Activated CD4-positive, alpha-beta T cell treated with anti-CD3 and anti-CD28 coated beads for 36 hours (primary cell): ENCODE measurements at regions of chr7 and their contacts with region 1.

Region 1: GRCh38 chr7:24660546-24660945 is 87.3 kb downstream of the PALS2 start:
- DNase-seq: no peak
- ATAC-seq: no peak
- H3K4me3 Mint-ChIP-seq: no peak overlapping the region
- H3K27ac Mint-ChIP-seq: no peak overlapping the region
- H3K4me1 Mint-ChIP-seq: peaks cover 3% of the 10 kb centered on the region
- H3K27me3 Mint-ChIP-seq: no peaks in the 10 kb centered on the region

Region 2: GRCh38 chr7:23570592-23571200 is 1089.8 kb before region 1 on chr7:
- CTCF ChIA-PET with region 1: no interaction called
- POLR2A ChIA-PET with region 1: no interaction called
- intact Hi-C with region 1: loop called in 1 of 2 experiments (anchors 5 kb)
- DNase-seq: peak; percentile 83
- ATAC-seq: peak; percentile 92
- H3K4me3 Mint-ChIP-seq: no peak overlapping the region
- H3K27ac Mint-ChIP-seq: no peak overlapping the region
- H3K4me1 Mint-ChIP-seq: no peaks in the 10 kb centered on the region
- H3K27me3 Mint-ChIP-seq: peaks cover 4% of the 10 kb centered on the region

Region 3: GRCh38 chr7:24521917-24522620 is 138.5 kb before region 1 on chr7:
- CTCF ChIA-PET with region 1: no interaction called
- POLR2A ChIA-PET with region 1: no interaction called
- intact Hi-C with region 1: no loop called
- DNase-seq: no peak
- ATAC-seq: no peak
- H3K4me3 Mint-ChIP-seq: no peak overlapping the region
- H3K27ac Mint-ChIP-seq: no peak overlapping the region
- H3K4me1 Mint-ChIP-seq: no peaks in the 10 kb centered on the region
- H3K27me3 Mint-ChIP-seq: peaks cover 21% of the 10 kb centered on the region

Region 4: GRCh38 chr7:24587848-24588247 is 72.7 kb before region 1 on chr7:
- CTCF ChIA-PET with region 1: interaction called, 3 read pairs
- POLR2A ChIA-PET with region 1: no interaction called
- intact Hi-C with region 1: loop called in 1 of 2 experiments (anchors 5 kb)
- DNase-seq: peak; percentile 64
- ATAC-seq: peak; percentile 64
- H3K4me3 Mint-ChIP-seq: no peak overlapping the region
- H3K27ac Mint-ChIP-seq: no peak overlapping the region
- H3K4me1 Mint-ChIP-seq: peaks cover 25% of the 10 kb centered on the region
- H3K27me3 Mint-ChIP-seq: no peaks in the 10 kb centered on the region

Region 5: DNA sequence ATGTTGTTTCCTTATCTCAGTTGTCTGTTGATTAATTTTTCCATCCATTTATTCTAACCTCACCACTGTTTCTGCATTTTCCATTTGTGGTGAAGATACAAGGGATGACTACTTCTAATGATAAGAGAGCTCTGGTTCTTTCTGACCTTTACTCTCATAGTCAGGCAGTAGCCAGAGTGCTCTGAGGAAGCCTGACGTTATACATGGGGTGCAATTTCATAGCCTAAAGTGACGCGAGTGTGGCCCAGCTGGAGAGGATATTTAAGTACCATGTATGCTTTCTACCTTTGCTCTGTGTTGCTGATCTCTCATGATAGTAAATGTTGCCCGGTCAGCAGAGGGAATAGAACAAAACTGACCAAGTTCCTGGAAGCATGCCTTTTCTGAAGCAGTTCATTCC is 498.4 kb after region 1 on chr7:
- CTCF ChIA-PET with region 1: no interaction called
- POLR2A ChIA-PET with region 1: interaction called, 10 read pairs
- intact Hi-C with region 1: no loop called
- DNase-seq: no peak
- ATAC-seq: no peak
- H3K4me3 Mint-ChIP-seq: no peak overlapping the region
- H3K27ac Mint-ChIP-seq: no peak overlapping the region
- H3K4me1 Mint-ChIP-seq: peaks cover 2% of the 10 kb centered on the region
- H3K27me3 Mint-ChIP-seq: no peaks in the 10 kb centered on the region